ENCODE measurements at regions of chr20 and their contacts with region 1.

Region 1: GRCh38 chr20:50189681-50190582 is 698 bp upstream of the CEBPB start:
- DNase-seq: peak; percentile 88
- H3K4me3 ChIP-seq: peak overlapping the region; percentile 82 to 93 (median 90)
- H3K27ac ChIP-seq: peak overlapping the region; percentile 98 to 100 (median 99)
- H3K4me1 ChIP-seq: peaks cover 4 to 41% (median 31%) of the 10 kb centered on the region in 4 donors
- H3K27me3 ChIP-seq: no peaks in the 10 kb centered on the region
- CTCF ChIP-seq: peak; percentile 70 to 81 (median 75)
- EP300 ChIP-seq: no peak
- POLR2A ChIP-seq: no peak

Region 2: DNA sequence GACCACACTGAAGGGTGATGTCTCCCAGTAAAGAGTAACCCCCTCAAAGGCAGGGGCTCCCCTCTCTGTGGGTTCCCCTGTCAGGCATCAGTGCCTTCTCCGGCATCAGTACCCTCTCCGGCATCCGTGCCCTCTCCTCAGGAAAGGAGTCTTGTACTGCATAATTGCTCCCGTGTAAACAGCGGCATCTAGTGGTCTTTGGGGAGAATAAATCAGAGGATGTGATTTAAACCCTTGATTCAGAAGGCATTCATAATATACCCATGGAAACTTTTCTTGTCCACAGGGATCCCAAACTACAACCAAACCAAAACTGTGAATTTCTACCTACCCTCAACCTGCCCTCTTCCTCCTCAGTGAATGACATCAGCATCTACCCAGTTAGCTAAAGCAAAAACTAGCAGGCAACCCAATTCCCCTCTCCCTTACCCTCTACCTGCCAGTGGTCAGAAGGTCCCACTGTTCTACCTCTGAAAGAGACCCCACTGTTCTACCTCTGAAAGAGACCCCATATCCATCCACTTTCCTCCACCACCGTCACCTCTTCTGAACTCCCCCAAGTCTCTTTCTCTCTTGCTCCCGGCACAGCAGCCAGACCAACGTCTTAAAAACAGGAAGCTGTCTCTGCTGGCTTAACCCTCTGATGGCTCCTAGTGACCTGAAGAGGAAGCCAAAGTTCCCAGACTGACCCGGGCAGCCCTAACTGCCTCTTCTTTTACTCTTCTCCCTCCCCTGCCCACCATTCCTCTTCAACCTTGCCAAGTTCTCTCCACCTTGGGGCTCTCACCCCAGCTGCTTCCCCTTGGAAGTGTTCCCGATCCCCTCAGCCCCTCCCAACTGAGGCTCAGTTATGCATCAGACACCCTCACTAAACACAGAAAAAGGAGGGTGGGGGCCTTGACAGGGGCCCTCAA is 104.2 kb before region 1 on chr20:
- in situ Hi-C with region 1: no loop called
- intact Hi-C with region 1: no loop called
- DNase-seq: peak; percentile 30
- H3K4me3 ChIP-seq: peak overlapping the region in 1 of 4 donors; percentile 21
- H3K27ac ChIP-seq: peak overlapping the region; percentile 37 to 53 (median 50)
- H3K4me1 ChIP-seq: peaks cover 11 to 23% (median 16%) of the 10 kb centered on the region in 4 donors
- H3K27me3 ChIP-seq: no peaks in the 10 kb centered on the region
- CTCF ChIP-seq: peak; percentile 62 to 82 (median 79)
- EP300 ChIP-seq: no peak
- POLR2A ChIP-seq: no peak

Region 3: GRCh38 chr20:50292324-50293243 is 102.7 kb after region 1 on chr20:
- in situ Hi-C with region 1: no loop called
- intact Hi-C with region 1: loop called (anchors 5 kb)
- DNase-seq: peak; percentile 83
- H3K4me3 ChIP-seq: no peak overlapping the region
- H3K27ac ChIP-seq: peak overlapping the region; percentile 65 to 77 (median 74)
- H3K4me1 ChIP-seq: peaks cover 9 to 20% (median 16%) of the 10 kb centered on the region in 4 donors
- H3K27me3 ChIP-seq: no peaks in the 10 kb centered on the region
- CTCF ChIP-seq: no peak
- EP300 ChIP-seq: peak; percentile 97
- POLR2A ChIP-seq: no peak

Region 4: GRCh38 chr20:50380641-50381040 is 190.7 kb after region 1 on chr20:
- in situ Hi-C with region 1: no loop called
- intact Hi-C with region 1: loop called (anchors 1 kb)
- DNase-seq: peak; percentile 59
- H3K4me3 ChIP-seq: no peak overlapping the region
- H3K27ac ChIP-seq: peak overlapping the region; percentile 82 to 89 (median 84)
- H3K4me1 ChIP-seq: peaks cover 31 to 68% (median 53%) of the 10 kb centered on the region in 4 donors
- H3K27me3 ChIP-seq: no peaks in the 10 kb centered on the region
- CTCF ChIP-seq: peak; percentile 28 to 62 (median 44)
- EP300 ChIP-seq: no peak
- POLR2A ChIP-seq: no peak

Region 5: GRCh38 chr20:50460460-50461267 is 270.7 kb after region 1 on chr20:
- in situ Hi-C with region 1: loop called (anchors 5 kb)
- intact Hi-C with region 1: loop called (anchors 2 kb)
- DNase-seq: peak; percentile 92
- H3K4me3 ChIP-seq: no peak overlapping the region
- H3K27ac ChIP-seq: peak overlapping the region; percentile 58 to 73 (median 66)
- H3K4me1 ChIP-seq: peaks cover 4 to 18% (median 16%) of the 10 kb centered on the region in 4 donors
- H3K27me3 ChIP-seq: no peaks in the 10 kb centered on the region
- CTCF ChIP-seq: peak; percentile 88 to 99 (median 95)
- EP300 ChIP-seq: no peak
- POLR2A ChIP-seq: no peak

Region 6: DNA sequence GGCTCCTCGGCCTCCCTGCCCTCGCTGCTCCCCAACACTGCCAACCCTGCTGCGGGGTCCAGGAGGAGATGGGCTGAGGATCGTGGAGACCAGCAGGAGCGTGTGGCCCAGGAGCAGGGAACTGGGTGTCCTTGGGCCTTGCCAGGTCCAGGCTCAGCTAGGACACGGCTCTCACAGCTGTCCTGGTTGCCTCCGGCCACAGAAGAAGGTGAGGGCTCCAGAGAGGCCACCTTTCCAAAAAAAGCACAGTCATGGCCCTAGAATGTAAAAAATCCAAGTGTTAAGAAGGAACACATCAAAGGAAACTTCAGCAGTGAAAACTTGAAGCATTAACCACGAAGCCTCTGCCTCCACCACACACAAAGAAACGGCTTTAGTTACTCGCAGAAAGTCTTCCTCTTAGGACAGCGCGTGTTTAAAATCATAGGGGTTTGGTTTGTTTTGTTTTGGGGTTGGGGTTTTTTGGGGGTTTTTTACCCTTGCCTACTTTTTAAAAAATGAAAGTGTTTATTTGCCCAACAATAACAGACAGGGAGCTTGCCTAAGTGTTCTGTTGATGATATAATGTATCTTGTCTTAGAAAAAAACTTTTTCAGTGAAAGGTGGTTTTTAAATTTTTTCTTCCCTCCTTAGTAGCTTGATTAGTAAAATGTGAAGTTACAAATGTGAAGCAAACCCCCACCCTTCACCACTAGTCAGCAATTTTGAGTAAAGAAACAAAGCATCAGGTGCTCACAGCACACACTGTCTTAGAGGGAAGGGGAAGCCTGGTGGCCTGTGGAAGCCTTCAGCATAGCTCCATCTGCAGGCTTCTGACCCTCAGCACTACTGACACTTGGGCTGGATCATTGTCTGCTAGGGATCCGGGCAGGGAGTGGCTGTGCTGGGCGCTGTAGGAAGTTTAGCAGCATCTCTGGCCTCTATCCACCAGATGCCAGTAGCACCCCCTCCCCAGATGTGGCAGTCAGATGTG is 380.2 kb after region 1 on chr20:
- in situ Hi-C with region 1: loop called (anchors 5 to 10 kb)
- intact Hi-C with region 1: no loop called
- DNase-seq: no peak
- H3K4me3 ChIP-seq: no peak overlapping the region
- H3K27ac ChIP-seq: no peak overlapping the region
- H3K4me1 ChIP-seq: peaks cover 0 to 11% (median 8%) of the 10 kb centered on the region in 4 donors
- H3K27me3 ChIP-seq: no peaks in the 10 kb centered on the region
- CTCF ChIP-seq: peak in 1 of 5 experiments; percentile 20
- EP300 ChIP-seq: no peak
- POLR2A ChIP-seq: no peak

Region 7: GRCh38 chr20:50575847-50576720 is 386.2 kb after region 1 on chr20:
- in situ Hi-C with region 1: loop called (anchors 5 to 10 kb)
- intact Hi-C with region 1: loop called (anchors 1 kb)
- DNase-seq: peak; percentile 78
- H3K4me3 ChIP-seq: no peak overlapping the region
- H3K27ac ChIP-seq: peak overlapping the region; percentile 51 to 75 (median 60)
- H3K4me1 ChIP-seq: peaks cover 9 to 43% (median 32%) of the 10 kb centered on the region in 4 donors
- H3K27me3 ChIP-seq: no peaks in the 10 kb centered on the region
- CTCF ChIP-seq: peak; percentile 69 to 79 (median 72)
- EP300 ChIP-seq: no peak
- POLR2A ChIP-seq: no peak

Region 8: DNA sequence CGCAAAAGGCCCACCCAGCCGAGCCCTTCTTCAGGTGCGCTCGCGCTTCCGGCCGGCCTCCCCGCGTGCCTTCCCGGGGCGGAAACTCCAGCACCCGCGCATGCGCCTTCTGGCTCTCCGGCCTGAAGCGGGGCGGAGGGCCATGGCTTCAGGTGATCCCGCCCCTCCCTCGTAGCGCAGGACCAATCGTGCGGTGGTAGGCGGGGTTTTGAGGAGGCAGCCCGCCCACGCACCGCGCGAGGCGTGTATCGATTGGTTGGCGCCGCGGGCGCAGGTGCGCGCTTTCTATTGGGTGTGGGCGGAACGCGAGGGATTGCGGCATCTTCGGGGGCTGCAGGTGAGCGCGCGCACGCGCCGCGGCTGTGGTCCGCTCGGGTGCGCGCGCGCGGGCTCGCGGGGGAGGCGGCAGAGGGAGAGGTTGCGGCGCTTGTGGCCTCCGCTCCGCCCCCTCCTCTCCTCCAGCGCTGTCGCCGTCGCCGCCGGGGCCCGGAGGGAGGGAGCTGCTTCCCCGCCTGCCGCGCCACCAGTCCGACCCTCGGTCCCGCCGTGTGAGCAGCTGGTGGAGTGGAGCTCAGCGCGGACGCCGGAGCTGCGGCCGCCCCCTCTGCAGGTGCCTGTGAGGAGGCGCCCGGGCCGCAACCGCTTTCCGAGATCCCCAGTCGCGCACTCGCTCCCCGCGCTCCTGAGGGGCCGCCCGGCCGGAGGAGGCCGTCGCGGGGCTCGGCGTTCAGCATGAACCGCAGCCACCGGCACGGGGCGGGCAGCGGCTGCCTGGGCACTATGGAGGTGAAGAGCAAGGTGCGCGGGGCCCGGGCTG is 541.3 kb after region 1 on chr20 and contains the start of gene PARD6B:
- in situ Hi-C with region 1: loop called in 1 of 4 experiments (anchors 25 kb)
- intact Hi-C with region 1: no loop called
- DNase-seq: peak; percentile 99
- H3K4me3 ChIP-seq: peak within 1 kb of the TSS; percentile 72 to 84 (median 77)
- H3K27ac ChIP-seq: peak within 1 kb of the TSS; percentile 89 to 92 (median 90)
- H3K4me1 ChIP-seq: peaks cover 7 to 59% (median 16%) of the 10 kb centered on the region in 4 donors
- H3K27me3 ChIP-seq: no peaks in the 10 kb centered on the region
- CTCF ChIP-seq: peak in 1 of 5 experiments; percentile 22
- EP300 ChIP-seq: no peak
- POLR2A ChIP-seq: peak; percentile 80
- total RNA-seq, gene PARD6B: 1.2 to 34.8 (median 17.2) TPM